ENCODE measurements at regions of chr12 and their contacts with region 1.

Region 1: DNA sequence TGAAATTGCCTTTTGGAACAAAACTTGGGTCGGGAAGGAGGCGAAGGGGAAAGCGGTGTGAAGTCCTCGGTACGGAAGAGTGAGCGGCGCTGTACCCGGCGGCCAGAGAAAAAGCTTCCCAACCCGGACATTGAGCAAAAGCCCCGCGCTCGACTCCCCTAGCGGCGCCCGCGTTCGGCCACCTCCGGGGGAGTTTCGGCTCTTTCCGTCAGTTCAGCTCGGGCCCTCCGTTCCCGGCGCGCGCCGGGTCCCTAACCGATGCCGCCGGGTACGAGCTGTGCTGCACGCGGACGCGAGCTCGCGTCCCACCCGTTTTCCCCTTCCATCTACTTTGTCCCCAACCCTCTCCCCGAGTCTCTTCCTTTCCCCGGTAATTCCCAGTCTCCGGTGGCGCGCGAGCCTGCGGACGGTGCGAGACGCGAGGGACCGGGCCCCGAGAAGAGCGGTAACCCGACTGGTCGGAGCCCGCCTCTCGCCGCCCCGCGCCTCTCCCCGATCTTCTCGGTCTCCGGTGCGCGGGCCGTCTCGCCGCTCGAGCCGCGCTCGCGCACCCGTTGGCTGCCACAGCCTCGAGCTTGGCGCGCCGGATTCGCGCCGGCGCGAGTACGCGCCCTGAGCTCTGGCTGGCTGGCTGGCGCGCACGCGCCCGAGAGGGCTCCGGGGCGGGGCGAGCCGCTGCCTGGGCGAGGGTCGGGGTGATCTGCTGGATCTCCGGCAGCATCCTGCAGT is 446 bp upstream of the SPATS2 start:
- DNase-seq: peak; percentile 93
- H3K4me3 Mint-ChIP-seq: peak overlapping the region; percentile 95
- H3K27ac Mint-ChIP-seq: peak overlapping the region; percentile 95
- H3K4me1 Mint-ChIP-seq: peaks cover 23% of the 10 kb centered on the region
- H3K27me3 Mint-ChIP-seq: no peaks in the 10 kb centered on the region

Region 2: DNA sequence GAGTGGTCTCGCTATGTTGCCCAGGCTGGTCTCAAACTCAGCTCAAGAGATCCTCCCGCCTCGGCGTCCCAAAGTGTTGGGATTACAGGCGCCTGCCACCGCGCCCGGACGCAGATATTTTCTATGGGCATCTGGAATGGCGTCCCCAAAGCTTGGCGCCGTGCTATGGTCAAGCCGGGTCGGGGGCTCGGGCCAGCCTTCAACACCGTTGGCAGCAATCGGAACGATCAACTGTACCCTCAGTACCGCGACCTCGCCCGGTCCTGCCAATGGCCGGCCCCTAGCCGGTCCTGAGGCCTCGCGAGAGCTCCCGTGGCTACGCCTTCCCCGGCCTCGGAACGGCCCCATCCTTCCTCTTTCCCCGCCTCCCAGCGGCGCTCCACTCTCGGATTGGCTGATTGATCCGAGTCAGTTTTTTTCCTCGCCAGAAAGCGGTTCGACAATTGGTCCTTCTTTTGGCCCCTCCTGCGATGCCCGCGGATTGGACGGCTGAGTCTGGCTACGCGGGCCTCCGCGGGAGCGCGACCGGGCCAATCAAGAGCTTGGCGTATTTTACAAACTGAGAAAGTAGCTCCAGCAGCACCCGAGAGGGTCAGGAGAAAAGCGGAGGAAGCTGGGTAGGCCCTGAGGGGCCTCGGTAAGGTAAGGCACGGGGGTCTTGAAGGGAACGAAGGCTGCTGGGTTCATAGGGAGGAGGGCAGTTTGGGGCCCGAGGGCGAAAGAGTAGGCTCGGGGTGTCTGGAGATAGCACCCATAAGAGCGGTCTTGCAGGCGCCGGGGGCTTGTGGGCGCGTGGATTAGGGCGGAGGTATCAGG is 43.9 kb before region 1 on chr12 and contains the start of gene TROAP:
- CTCF ChIA-PET with region 1: interaction called, 6 read pairs
- POLR2A ChIA-PET with region 1: interaction called, 12 read pairs
- intact Hi-C with region 1: no loop called
- DNase-seq: peak; percentile 99
- H3K4me3 Mint-ChIP-seq: peak within 1 kb of the TSS; percentile 99
- H3K27ac Mint-ChIP-seq: peak within 1 kb of the TSS; percentile 90
- H3K4me1 Mint-ChIP-seq: peaks cover 19% of the 10 kb centered on the region
- H3K27me3 Mint-ChIP-seq: no peaks in the 10 kb centered on the region
- total RNA-seq, gene TROAP: 57.7 to 64.9 TPM

Region 3: DNA sequence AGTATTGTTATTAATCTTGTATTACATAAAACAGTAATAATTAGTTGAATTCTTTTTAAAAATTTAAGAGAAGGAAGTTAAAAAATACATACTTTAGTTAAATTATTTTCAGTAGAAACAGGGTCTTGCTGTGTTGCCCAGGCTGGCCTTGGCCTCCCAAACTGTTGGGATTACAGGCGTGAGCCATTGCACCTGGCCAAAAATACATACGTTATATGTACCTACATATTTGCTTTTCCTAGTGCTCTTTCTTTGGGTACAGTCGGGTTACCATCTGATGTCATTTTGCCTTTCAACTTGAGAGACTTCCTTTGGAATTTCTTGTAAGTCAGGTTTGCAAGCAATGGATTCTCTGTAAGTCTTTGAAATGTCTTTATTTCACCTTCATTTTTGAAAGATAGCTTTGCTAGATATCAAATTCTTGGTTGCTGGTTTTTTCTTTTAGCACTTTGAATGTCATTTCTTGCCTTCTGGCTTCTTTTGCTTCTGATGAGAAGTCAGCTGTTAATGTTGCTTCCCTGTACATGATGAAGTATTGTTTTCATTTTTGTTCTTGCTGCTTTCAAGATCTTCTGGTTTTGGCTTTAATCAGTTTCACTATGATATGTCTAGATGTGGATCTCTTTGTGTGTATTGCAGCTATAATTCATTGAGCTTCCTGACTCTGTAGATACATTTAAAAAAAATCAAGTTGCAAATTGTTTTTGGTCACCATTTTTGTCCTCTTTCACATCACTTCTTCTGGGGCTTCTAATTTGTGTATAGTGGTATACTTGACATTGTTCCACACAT is 84.8 kb after region 1 on chr12:
- CTCF ChIA-PET with region 1: no interaction called
- POLR2A ChIA-PET with region 1: no interaction called
- intact Hi-C with region 1: loop called (anchors 5 kb)
- DNase-seq: no peak
- H3K4me3 Mint-ChIP-seq: no peak overlapping the region
- H3K27ac Mint-ChIP-seq: peak overlapping the region; percentile 68
- H3K4me1 Mint-ChIP-seq: peaks cover 18% of the 10 kb centered on the region
- H3K27me3 Mint-ChIP-seq: no peaks in the 10 kb centered on the region

Region 4: GRCh38 chr12:49567611-49568441 is 201.0 kb after region 1 on chr12 and contains the start of gene MCRS1:
- CTCF ChIA-PET with region 1: interaction called, 4 read pairs
- POLR2A ChIA-PET with region 1: interaction called, 5 read pairs
- intact Hi-C with region 1: loop called (anchors 2 kb)
- DNase-seq: peak; percentile 90
- H3K4me3 Mint-ChIP-seq: peak within 1 kb of the TSS; percentile 98
- H3K27ac Mint-ChIP-seq: peak within 1 kb of the TSS; percentile 96
- H3K4me1 Mint-ChIP-seq: peaks cover 47% of the 10 kb centered on the region
- H3K27me3 Mint-ChIP-seq: no peaks in the 10 kb centered on the region
- total RNA-seq, gene MCRS1: 52.3 to 56.8 TPM